Caco-2 (cell line): ENCODE measurements at regions of chr5 and their contacts with region 1.

Region 1: DNA sequence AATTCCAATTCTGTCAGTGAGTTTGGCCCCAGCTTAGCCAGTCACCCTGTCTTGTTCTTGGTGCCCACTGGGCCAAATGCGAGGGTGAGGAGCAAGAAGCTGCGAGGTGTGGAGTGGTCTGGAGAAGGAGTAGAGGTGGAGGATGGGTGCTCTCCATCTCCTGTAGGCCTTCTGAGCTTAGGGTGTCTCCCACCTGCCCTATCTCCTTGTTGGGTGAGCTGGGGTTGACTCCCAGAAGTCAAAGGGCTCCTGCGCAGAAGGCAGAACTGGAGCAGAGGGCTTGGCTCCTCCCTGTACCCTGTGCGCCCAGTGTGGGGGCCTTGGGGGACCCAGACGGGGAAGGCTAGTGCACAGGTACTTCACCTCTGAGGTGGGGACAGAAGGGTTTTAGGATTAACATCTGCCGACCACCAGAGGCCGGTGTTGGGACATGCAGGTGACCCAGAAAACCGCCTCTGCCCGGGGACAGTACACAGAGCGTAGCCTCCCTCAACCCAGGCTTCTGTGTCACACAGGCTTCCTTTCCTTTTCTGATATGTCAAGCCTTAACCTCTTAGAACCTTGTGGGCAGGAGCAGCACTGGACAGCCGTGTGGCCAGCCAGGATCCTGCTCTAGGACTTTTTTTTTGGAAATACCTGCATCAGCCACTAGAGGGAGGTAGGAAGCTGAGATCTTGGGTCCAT is 16.9 kb downstream of the IL5 start:
- DNase-seq: peak; percentile 63 to 84
- H3K4me3 ChIP-seq: peak overlapping the region; percentile 19; the same call in 1 of the 2 replicates
- H3K4me3 Mint-ChIP-seq: peak overlapping the region; percentile 15
- H3K27ac Mint-ChIP-seq: no peak overlapping the region
- H3K4me1 ChIP-seq: no peaks in the 10 kb centered on the region
- H3K4me1 Mint-ChIP-seq: peaks cover under 1% of the 10 kb centered on the region
- H3K27me3 ChIP-seq: no peaks in the 10 kb centered on the region
- H3K27me3 Mint-ChIP-seq: peaks cover 1% of the 10 kb centered on the region
- CTCF ChIP-seq: peak; percentile 84 to 94

Region 2: GRCh38 chr5:132556763-132557477 is 30.5 kb after region 1 on chr5 and contains the start of gene RAD50:
- CTCF ChIA-PET with region 1: interaction called, 14 read pairs
- POLR2A ChIA-PET with region 1: interaction called, 5 read pairs
- intact Hi-C with region 1: loop called (anchors 1 kb)
- DNase-seq: peak; percentile 97 to 98
- H3K4me3 ChIP-seq: peak within 1 kb of the TSS; percentile 89
- H3K4me3 Mint-ChIP-seq: peak within 1 kb of the TSS; percentile 99
- H3K27ac Mint-ChIP-seq: peak within 1 kb of the TSS; percentile 100
- H3K4me1 ChIP-seq: peaks cover 11% of the 10 kb centered on the region; the same call in 1 of the 2 replicates
- H3K4me1 Mint-ChIP-seq: peaks cover 13% of the 10 kb centered on the region
- H3K27me3 ChIP-seq: no peaks in the 10 kb centered on the region
- H3K27me3 Mint-ChIP-seq: no peaks in the 10 kb centered on the region
- CTCF ChIP-seq: no peak
- total RNA-seq, gene RAD50: 53.2 and 58.2 TPM in 2 replicates

Region 3: GRCh38 chr5:132591145-132591544 is 64.7 kb after region 1 on chr5:
- CTCF ChIA-PET with region 1: no interaction called
- POLR2A ChIA-PET with region 1: no interaction called
- intact Hi-C with region 1: loop called (anchors 5 kb)
- DNase-seq: no peak
- H3K4me3 ChIP-seq: no peak overlapping the region
- H3K4me3 Mint-ChIP-seq: no peak overlapping the region
- H3K27ac Mint-ChIP-seq: no peak overlapping the region
- H3K4me1 ChIP-seq: no peaks in the 10 kb centered on the region; the same call in 1 of the 2 replicates
- H3K4me1 Mint-ChIP-seq: peaks cover 10% of the 10 kb centered on the region
- H3K27me3 ChIP-seq: no peaks in the 10 kb centered on the region
- H3K27me3 Mint-ChIP-seq: no peaks in the 10 kb centered on the region
- CTCF ChIP-seq: peak in 1 of 2 experiments; percentile 25

Region 4: GRCh38 chr5:132674671-132675506 is 148.5 kb after region 1 on chr5:
- CTCF ChIA-PET with region 1: no interaction called
- POLR2A ChIA-PET with region 1: no interaction called
- intact Hi-C with region 1: loop called (anchors 10 kb)
- DNase-seq: no peak
- H3K4me3 ChIP-seq: no peak overlapping the region
- H3K4me3 Mint-ChIP-seq: no peak overlapping the region
- H3K27ac Mint-ChIP-seq: no peak overlapping the region
- H3K4me1 ChIP-seq: peaks cover 5% of the 10 kb centered on the region; the same call in 1 of the 2 replicates
- H3K4me1 Mint-ChIP-seq: no peaks in the 10 kb centered on the region
- H3K27me3 ChIP-seq: no peaks in the 10 kb centered on the region
- H3K27me3 Mint-ChIP-seq: no peaks in the 10 kb centered on the region
- CTCF ChIP-seq: no peak

Region 5: DNA sequence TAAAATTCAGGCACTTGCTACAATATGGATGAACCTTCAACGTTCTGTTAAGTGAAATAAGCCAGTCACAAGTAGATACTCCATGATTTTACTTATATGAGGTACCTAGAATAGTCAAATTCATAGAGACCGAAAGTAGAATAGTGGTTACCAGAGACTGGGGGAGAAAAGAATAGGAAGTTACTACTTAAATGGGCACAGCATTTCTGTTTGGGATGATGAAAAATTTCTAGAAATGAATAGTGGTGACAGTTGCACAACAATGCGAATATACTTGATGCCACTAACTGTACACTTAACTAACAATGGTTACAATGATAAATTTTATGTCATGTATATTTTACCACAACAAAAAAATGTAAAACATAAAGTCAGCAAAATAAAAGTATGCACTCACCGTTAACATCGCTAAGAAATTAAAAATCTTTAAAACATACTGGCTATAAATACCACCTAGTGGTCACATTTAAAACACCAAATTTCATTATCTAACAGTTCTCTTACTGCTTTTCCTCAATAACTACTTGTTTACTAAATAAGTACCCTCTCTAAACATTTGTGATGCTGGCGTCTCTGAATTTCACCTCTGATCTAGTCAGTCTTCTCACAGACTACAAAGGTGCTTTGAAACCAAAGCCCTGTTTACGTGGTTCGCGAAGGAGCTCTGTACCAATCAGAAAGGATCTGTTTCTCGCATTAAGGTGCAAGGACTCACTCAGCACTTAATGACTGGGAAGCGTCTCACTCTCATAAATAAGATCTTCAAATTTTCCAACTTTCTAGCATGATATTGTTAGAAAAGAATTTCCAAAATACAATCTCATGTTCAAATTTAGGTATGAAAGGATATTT is 188.2 kb after region 1 on chr5:
- CTCF ChIA-PET with region 1: interaction called, 4 read pairs
- POLR2A ChIA-PET with region 1: no interaction called
- intact Hi-C with region 1: loop called (anchors 1 kb)
- DNase-seq: no peak
- H3K4me3 ChIP-seq: no peak overlapping the region
- H3K4me3 Mint-ChIP-seq: no peak overlapping the region
- H3K27ac Mint-ChIP-seq: no peak overlapping the region
- H3K4me1 ChIP-seq: no peaks in the 10 kb centered on the region
- H3K4me1 Mint-ChIP-seq: no peaks in the 10 kb centered on the region
- H3K27me3 ChIP-seq: no peaks in the 10 kb centered on the region
- H3K27me3 Mint-ChIP-seq: no peaks in the 10 kb centered on the region
- CTCF ChIP-seq: peak; percentile 11 to 37